ENCODE measurements at regions of chr17 and their contacts with region 1.

Region 1: DNA sequence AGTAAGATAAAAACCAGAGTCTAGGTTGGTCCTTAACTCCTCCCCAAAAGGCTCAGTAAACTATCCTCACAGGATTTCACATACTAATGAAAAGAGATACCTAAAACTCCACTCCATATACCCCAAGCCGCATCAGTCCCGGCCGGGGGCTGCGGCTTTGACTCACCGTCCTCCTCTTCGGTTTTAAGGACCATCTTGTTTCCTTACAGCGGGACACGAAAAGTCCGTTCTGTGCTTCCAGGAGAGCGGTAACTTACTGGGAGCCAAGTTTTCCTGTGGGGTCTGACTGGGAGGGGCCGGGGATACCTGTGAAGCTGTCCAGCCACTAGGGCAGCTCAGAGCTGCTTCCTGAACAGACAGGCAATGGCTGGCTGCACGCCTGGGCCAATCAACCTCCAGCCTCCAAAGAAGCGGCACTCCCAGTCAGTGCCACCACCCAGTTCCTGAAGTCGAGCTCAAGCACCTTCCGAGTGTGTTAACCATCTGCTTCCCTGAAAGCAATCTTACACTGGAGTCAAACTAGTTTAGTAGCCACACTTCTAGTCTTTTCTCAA is 45.5 kb downstream of the CYTH1 start:
- DNase-seq: peak; percentile 55
- H3K4me3 Mint-ChIP-seq: peak overlapping the region; percentile 87
- H3K27ac Mint-ChIP-seq: peak overlapping the region; percentile 84
- H3K4me1 Mint-ChIP-seq: peaks cover 70% of the 10 kb centered on the region
- H3K27me3 Mint-ChIP-seq: no peaks in the 10 kb centered on the region

Region 2: DNA sequence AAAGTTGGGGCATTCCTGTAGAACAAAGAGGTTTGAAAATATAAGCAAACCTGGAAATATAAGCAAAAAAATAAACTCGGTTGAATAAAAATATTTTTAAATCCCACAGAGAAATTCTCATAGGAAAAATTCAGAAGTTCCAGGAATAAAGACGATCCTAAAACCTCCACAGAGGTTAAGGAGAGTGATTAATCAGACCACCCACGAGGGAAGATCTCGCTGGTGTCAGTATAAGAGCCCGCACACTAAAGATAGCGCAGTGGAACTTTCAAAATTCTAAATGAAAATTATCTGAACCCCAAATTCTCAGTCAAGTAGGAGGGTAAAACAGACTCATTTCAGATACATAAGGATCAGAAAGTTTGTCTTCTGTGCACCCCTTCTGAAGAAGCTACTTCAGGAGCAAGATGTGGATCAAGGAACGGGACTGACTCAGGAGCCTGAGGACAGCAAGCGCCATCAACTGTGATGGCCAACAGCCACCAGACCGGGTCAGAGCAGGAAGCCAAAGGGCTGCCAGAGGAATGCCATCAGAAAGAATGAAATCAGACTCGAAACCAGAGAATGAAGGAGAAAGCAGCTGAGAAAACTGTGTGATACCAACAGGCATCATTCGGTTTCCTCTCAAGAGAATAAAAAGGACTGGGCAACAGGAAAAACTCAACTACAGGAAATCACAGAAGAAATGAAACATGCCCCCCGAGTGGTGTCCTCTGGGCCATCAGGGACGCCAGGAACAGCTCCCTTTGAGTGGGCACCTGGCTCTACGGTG is 21.4 kb before region 1 on chr17:
- intact Hi-C with region 1: loop called (anchors 2 kb)
- DNase-seq: no peak
- H3K4me3 Mint-ChIP-seq: peak overlapping the region; percentile 61
- H3K27ac Mint-ChIP-seq: peak overlapping the region; percentile 65
- H3K4me1 Mint-ChIP-seq: peaks cover 74% of the 10 kb centered on the region
- H3K27me3 Mint-ChIP-seq: no peaks in the 10 kb centered on the region

Measured in activated T-helper 2 cell treated with anti-CD3 and anti-CD28 coated beads, Interferon-gamma antibody, Interleukin-2, Interleukin-4, amounts not matched to agents 10 μg/mL and 5 μg/mL and 100 μg/mL, durations not matched to agents 14 hours and 24 hours and 36 hours (primary cell).